ENCODE measurements at regions of chr22 and their contacts with region 1.

Region 1: GRCh38 chr22:29457730-29458129 is 19.3 kb downstream of the RFPL1 start:
- DNase-seq: peak in 1 of 2 experiments; percentile 70
- H3K4me3 ChIP-seq: no peak overlapping the region
- H3K27ac ChIP-seq: no peak overlapping the region
- H3K4me1 ChIP-seq: no peaks in the 10 kb centered on the region; a peak in 2 of 7 replicates
- H3K27me3 ChIP-seq: no peaks in the 10 kb centered on the region
- CTCF ChIP-seq: no peak
- EP300 ChIP-seq: no peak
- POLR2A ChIP-seq: no peak
- RAD21 ChIP-seq: no peak

Region 2: GRCh38 chr22:29470159-29470855 is 12.6 kb after region 1 on chr22:
- CTCF ChIA-PET with region 1: interaction called, 39 read pairs
- POLR2A ChIA-PET with region 1: interaction called, 3 read pairs
- DNase-seq: peak; percentile 81 to 99
- H3K4me3 ChIP-seq: peak overlapping the region; percentile 38 to 69 (median 50)
- H3K27ac ChIP-seq: no peak overlapping the region
- H3K4me1 ChIP-seq: peaks cover 0 to 6% (median 3%) of the 10 kb centered on the region in 4 experiments; a peak in 3 of 7 replicates
- H3K27me3 ChIP-seq: peaks cover 0 to 4% (median 2%) of the 10 kb centered on the region in 4 experiments; a peak in 3 of 7 replicates
- CTCF ChIP-seq: peak; percentile 90 to 98 (median 97)
- EP300 ChIP-seq: peak in 1 of 2 experiments; percentile 85; a peak in 2 of 3 replicates
- POLR2A ChIP-seq: 0 out of 3 replicates have a peak, but pooled peaks of 1 of the 2 experiments have one; percentile 27
- RAD21 ChIP-seq: peak; percentile 57 to 72

Measured in H1 (cell line).